Activated CD4-positive, alpha-beta memory T cell treated with anti-CD3 and anti-CD28 coated beads for 36 hours (primary cell): ENCODE measurements at regions of chr6 and their contacts with region 1.

Region 1: DNA sequence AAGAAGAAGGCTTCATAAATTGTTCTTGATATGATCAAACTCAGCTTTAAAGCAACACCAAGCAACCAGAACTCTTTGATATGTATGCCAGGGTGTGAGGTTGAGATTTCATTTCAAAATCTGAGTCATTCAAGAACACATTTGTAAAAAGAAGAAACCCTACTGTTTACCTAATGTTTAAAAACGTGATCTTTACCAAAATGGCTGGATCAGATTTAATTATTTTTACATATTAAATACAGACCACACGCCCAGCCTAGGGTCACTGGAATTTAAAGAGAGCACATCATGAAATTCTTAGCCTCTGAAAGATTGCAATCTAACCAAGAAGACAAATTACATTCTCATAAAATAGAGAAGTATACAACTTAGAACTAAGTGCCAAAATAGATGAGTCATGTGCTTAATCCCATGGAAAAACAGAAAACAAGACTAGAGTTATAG is 206.8 kb upstream of the SMLR1 start:
- DNase-seq: no peak
- H3K4me3 Mint-ChIP-seq: no peak overlapping the region
- H3K27ac Mint-ChIP-seq: no peak overlapping the region
- H3K4me1 Mint-ChIP-seq: peaks cover 14% of the 10 kb centered on the region
- H3K27me3 Mint-ChIP-seq: peaks cover 2% of the 10 kb centered on the region

Region 2: DNA sequence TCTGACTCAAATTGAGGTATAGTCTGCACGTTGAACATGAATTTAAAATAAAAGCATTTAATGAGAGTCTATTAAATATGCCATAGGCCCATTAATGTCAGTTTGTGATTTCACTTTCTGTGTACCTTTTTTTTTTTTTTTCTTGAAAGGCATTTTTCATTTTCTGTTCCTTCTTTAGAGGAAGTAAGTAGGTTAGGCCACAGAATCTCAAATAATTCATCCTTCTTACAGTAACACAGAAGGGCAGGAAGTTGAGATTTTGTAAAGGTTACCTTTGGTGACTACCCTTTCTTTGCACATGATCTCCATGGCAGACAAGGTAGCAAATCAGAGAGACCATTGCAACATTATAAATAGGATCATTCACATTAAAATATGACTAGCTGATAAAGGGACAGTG is 592.4 kb before region 1 on chr6:
- CTCF ChIA-PET with region 1: no interaction called
- POLR2A ChIA-PET with region 1: no interaction called
- intact Hi-C with region 1: loop called (anchors 5 kb)
- DNase-seq: no peak
- H3K4me3 Mint-ChIP-seq: no peak overlapping the region
- H3K27ac Mint-ChIP-seq: peak overlapping the region; percentile 70
- H3K4me1 Mint-ChIP-seq: peaks cover 53% of the 10 kb centered on the region
- H3K27me3 Mint-ChIP-seq: no peaks in the 10 kb centered on the region

Region 3: GRCh38 chr6:130322673-130323268 is 297.6 kb before region 1 on chr6:
- CTCF ChIA-PET with region 1: no interaction called
- POLR2A ChIA-PET with region 1: no interaction called
- intact Hi-C with region 1: no loop called
- DNase-seq: peak; percentile 59
- H3K4me3 Mint-ChIP-seq: no peak overlapping the region
- H3K27ac Mint-ChIP-seq: no peak overlapping the region
- H3K4me1 Mint-ChIP-seq: peaks cover 4% of the 10 kb centered on the region
- H3K27me3 Mint-ChIP-seq: no peaks in the 10 kb centered on the region

Region 4: DNA sequence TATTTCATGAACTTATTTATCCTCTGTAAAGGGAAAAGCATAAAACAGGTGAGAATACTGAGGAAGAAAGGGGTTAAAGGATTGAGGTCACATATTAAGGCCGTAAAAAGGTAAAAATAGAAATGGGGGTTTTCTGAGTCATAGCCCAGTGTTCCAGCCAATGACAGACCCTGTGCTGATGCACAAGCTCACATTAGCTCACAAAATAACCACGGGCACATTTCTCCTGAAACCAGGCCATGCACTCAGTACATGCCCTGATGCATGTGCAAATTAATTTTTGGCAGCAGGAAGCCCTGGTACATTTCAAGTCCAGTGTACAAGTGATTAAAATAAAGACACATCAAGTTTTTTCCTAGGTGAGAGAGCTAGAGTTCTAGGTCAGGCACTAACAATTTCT is 60.1 kb before region 1 on chr6:
- CTCF ChIA-PET with region 1: no interaction called
- POLR2A ChIA-PET with region 1: no interaction called
- intact Hi-C with region 1: loop called (anchors 5 kb)
- DNase-seq: no peak
- H3K4me3 Mint-ChIP-seq: no peak overlapping the region
- H3K27ac Mint-ChIP-seq: no peak overlapping the region
- H3K4me1 Mint-ChIP-seq: peaks cover 14% of the 10 kb centered on the region
- H3K27me3 Mint-ChIP-seq: no peaks in the 10 kb centered on the region

Region 5: DNA sequence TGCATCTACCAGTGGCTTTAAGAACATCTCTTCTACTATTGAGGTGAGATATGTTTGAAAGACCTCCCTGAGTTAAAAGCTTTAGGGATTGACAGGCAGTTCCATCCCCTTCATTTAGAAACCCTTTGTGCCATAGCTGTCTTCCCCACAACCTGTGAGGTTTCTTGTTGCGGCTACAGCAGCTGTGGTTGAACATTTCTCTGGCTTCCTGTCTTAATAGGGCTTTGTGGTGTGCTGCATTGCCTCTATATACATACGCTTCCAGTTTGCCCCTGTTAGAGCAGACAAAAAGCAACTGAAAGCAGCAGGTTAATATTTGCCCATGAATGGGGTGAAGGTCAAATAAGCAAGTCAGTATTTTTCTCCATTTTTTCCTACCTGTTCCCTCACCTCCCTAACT is 44.4 kb before region 1 on chr6:
- CTCF ChIA-PET with region 1: no interaction called
- POLR2A ChIA-PET with region 1: no interaction called
- intact Hi-C with region 1: loop called (anchors 2 kb)
- DNase-seq: peak; percentile 77
- H3K4me3 Mint-ChIP-seq: peak overlapping the region; percentile 23
- H3K27ac Mint-ChIP-seq: peak overlapping the region; percentile 45
- H3K4me1 Mint-ChIP-seq: peaks cover 40% of the 10 kb centered on the region
- H3K27me3 Mint-ChIP-seq: no peaks in the 10 kb centered on the region

Region 6: GRCh38 chr6:130610303-130610702 is 10.1 kb before region 1 on chr6:
- CTCF ChIA-PET with region 1: no interaction called
- POLR2A ChIA-PET with region 1: no interaction called
- intact Hi-C with region 1: no loop called
- DNase-seq: no peak
- H3K4me3 Mint-ChIP-seq: no peak overlapping the region
- H3K27ac Mint-ChIP-seq: no peak overlapping the region
- H3K4me1 Mint-ChIP-seq: peaks cover 2% of the 10 kb centered on the region
- H3K27me3 Mint-ChIP-seq: no peaks in the 10 kb centered on the region

Region 7: GRCh38 chr6:130676077-130676772 is 55.9 kb after region 1 on chr6:
- CTCF ChIA-PET with region 1: no interaction called
- POLR2A ChIA-PET with region 1: no interaction called
- intact Hi-C with region 1: loop called (anchors 5 kb)
- DNase-seq: no peak
- H3K4me3 Mint-ChIP-seq: no peak overlapping the region
- H3K27ac Mint-ChIP-seq: no peak overlapping the region
- H3K4me1 Mint-ChIP-seq: peaks cover 14% of the 10 kb centered on the region
- H3K27me3 Mint-ChIP-seq: no peaks in the 10 kb centered on the region